Left ventricle myocardium inferior (tissue), 1 donor: ENCODE measurements at regions of chr1 and their contacts with region 1.

Region 1: GRCh38 chr1:77900687-77901293 is 12.4 kb downstream of the NEXN start:
- DNase-seq: no peak
- H3K4me3 ChIP-seq: peak overlapping the region; percentile 48
- H3K27ac ChIP-seq: peak overlapping the region; percentile 72
- H3K4me1 ChIP-seq: peaks cover 54% of the 10 kb centered on the region
- H3K27me3 ChIP-seq: no peaks in the 10 kb centered on the region
- CTCF ChIP-seq: peak; percentile 68

Region 2: GRCh38 chr1:77639056-77639455 is 261.7 kb before region 1 on chr1:
- intact Hi-C with region 1: no loop called
- DNase-seq: no peak
- H3K4me3 ChIP-seq: no peak overlapping the region
- H3K27ac ChIP-seq: no peak overlapping the region
- H3K4me1 ChIP-seq: peaks cover 13% of the 10 kb centered on the region
- H3K27me3 ChIP-seq: no peaks in the 10 kb centered on the region
- CTCF ChIP-seq: no peak

Region 3: DNA sequence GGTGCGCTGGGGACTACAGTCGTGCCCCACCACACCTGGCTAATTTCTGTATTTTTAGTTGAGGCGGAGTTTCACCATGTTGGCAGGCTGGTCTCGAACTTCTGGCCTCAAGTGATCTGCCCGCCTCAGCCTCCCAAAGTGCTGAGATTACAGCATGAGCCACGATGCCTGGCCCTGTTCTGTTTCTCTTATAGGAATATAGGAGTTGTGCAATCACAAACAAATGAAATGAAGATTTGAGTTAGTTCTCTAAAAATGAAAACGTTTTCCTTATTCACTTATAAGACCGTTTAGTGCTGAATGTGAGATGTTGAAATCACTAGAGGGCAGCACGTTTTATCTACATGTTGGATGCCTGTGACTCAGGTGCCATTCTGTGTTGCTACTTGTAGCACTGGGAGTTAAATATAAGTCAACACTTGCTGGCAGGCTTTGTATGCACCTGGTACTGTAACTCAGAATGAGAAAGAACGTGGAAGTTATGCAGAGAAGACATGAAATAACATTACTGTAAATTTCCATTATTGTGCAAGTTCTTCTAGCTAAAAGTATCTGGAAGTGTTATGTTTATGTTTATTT is 75.6 kb before region 1 on chr1:
- intact Hi-C with region 1: loop called (anchors 5 kb)
- DNase-seq: no peak
- H3K4me3 ChIP-seq: no peak overlapping the region
- H3K27ac ChIP-seq: peak overlapping the region; percentile 69
- H3K4me1 ChIP-seq: peaks cover 37% of the 10 kb centered on the region
- H3K27me3 ChIP-seq: no peaks in the 10 kb centered on the region
- CTCF ChIP-seq: peak; percentile 42

Region 4: GRCh38 chr1:78045926-78046778 is 145.4 kb after region 1 on chr1 and contains the start of gene GIPC2:
- intact Hi-C with region 1: no loop called
- DNase-seq: peak; percentile 23
- H3K4me3 ChIP-seq: peak within 1 kb of the TSS; percentile 92
- H3K27ac ChIP-seq: peak within 1 kb of the TSS; percentile 80
- H3K4me1 ChIP-seq: peaks cover 47% of the 10 kb centered on the region
- H3K27me3 ChIP-seq: no peaks in the 10 kb centered on the region
- CTCF ChIP-seq: no peak
- total RNA-seq, gene GIPC2: 2.5 TPM